Caki2 (cell line): ENCODE measurements at regions of chr1 and their contacts with region 1.

Region 1: GRCh38 chr1:40849801-40850592 is 12.2 kb downstream of the CITED4 start:
- DNase-seq: peak; percentile 54

Region 2: DNA sequence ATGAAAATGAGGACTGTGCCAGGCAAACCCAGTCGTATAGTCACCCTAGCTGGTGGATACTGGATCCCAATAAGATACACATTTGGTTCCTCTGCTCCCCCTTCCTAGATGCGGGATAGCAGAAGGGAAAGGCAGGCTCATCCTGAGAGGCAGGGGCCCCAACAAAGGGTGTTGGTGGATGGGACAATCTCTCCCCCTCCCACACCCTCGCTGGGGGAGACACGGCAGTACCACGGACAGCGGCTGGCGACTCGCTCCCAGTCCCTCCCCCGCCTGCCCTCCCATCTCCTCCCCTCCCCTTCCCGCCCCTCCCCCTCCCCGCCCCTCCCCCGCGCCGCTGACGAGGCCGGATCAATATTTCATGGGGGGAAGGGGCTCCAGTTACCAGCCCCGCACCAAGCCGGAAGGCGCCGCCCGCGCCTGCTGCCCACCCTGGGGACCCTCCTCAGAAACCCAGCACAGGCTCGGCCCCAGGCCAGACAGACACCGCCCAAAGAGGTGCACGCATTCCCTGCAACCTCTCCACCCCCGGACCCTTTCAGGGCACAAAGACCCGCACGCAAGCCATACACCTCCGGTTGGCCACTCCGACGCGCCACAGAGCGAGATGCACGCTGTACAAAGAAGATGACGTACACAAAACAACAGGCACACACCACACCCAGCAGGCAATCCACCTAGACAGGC is 196.0 kb before region 1 on chr1:
- in situ Hi-C with region 1: no loop called
- DNase-seq: no peak

Region 3: DNA sequence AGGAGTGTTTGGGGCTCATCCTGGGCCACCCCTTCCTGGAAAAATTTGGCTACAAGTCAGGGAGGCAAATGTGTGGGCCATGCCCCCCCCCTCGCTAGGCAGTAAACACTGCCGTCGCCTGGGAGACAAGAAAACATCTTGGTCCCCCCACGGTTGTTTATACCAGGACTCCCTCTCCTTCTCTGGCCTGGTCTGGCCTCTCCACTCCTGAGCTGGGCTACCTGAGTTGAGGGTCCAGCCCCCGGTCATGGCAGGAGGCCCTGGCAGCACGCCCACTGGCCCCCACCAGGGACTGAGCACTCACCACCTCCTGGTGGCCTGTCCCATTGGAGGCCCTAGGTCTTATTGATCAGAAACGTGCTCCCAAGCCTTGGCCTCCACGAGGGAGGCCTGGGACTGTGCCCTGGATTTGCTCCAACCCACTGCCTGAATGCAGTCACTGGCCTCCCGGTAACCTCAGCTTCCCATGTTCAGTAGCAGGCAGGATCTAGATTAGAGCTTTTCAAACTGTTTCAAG is 50.6 kb before region 1 on chr1:
- in situ Hi-C with region 1: no loop called
- DNase-seq: no peak

Region 4: GRCh38 chr1:40906781-40907400 is 56.9 kb after region 1 on chr1:
- in situ Hi-C with region 1: no loop called
- DNase-seq: no peak

Region 5: GRCh38 chr1:40948741-40949443 is 98.9 kb after region 1 on chr1:
- in situ Hi-C with region 1: loop called (anchors 10 kb)
- DNase-seq: peak; percentile 72